Endothelial cell of umbilical vein (primary cell): ENCODE measurements at regions of chr1 and their contacts with region 1.

Region 1: GRCh38 chr1:59776960-59777852 is 37.5 kb upstream of the HOOK1 start:
- DNase-seq: peak; percentile 80
- H3K4me3 ChIP-seq: no peak overlapping the region
- H3K27ac ChIP-seq: peak overlapping the region; percentile 36
- H3K4me1 ChIP-seq: peaks cover 11% of the 10 kb centered on the region
- H3K27me3 ChIP-seq: no peaks in the 10 kb centered on the region
- CTCF ChIP-seq: peak; percentile 19 to 44
- POLR2A ChIP-seq: no peak

Region 2: GRCh38 chr1:59767119-59767518 is 10.1 kb before region 1 on chr1:
- CTCF ChIA-PET with region 1: interaction called, 17 read pairs
- POLR2A ChIA-PET with region 1: no interaction called
- dilution Hi-C with region 1: no loop called
- intact Hi-C with region 1: no loop called
- DNase-seq: peak; percentile 88
- H3K4me3 ChIP-seq: no peak overlapping the region
- H3K27ac ChIP-seq: no peak overlapping the region
- H3K4me1 ChIP-seq: peaks cover 14% of the 10 kb centered on the region
- H3K27me3 ChIP-seq: no peaks in the 10 kb centered on the region
- CTCF ChIP-seq: no peak
- POLR2A ChIP-seq: no peak